ENCODE measurements at regions of chr11 and their contacts with region 1.

Region 1: DNA sequence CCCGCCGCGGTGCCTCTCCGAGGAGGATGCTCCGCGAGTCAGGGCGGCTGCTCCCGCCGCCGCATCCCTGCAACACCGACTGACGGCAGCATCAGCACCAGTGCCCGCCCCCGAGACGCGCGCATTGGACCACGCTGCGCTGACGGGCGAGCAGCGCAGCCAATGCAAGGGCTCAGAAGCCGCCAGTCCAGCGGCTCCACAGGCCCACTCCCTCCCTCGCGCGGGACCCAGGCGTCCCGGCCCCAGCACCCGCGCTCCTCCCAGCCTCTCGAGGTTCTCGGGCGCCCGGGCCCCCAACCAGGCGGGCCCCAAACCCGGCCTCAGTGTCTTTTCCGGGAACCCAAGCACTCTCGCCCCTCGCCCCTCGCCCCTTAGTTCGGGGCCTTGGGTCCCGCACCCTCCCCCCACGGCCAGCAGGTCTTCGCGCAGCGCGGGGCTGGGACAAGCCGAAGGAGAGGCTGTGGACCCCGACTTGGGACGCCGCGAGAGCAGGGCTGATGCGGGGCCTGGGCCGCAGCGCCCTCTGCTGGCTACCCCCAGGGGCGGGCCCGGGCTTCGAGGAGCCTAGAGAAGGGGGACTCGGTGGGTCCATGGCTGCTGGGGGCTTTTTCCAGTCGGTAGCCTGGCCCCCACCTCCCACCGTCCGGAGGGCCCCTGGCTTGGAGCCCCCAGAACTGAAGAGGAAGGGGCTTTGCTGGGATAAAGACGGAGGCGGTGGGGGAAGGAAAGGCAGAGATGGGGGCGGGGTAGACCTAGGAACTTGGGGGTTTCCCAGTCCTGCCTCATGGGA is at the start of gene NRXN2:
- DNase-seq: peak; percentile 78 to 89
- H3K4me3 ChIP-seq: peak within 1 kb of the TSS; percentile 59 to 69
- H3K27ac ChIP-seq: peak within 1 kb of the TSS; percentile 49 to 71
- H3K4me1 ChIP-seq: peaks cover 0 to 7% (median 3%) of the 10 kb centered on the region in 4 donors
- H3K27me3 ChIP-seq: peaks cover 0 to 45% of the 10 kb centered on the region in 2 donors
- CTCF ChIP-seq: peak; percentile 89 to 98

Region 2: GRCh38 chr11:64386306-64386702 is 337.0 kb before region 1 on chr11:
- intact Hi-C with region 1: loop called (anchors 10 kb)
- DNase-seq: no peak
- H3K4me3 ChIP-seq: no peak overlapping the region
- H3K27ac ChIP-seq: no peak overlapping the region
- H3K4me1 ChIP-seq: peaks cover 9 to 26% (median 20%) of the 10 kb centered on the region in 4 donors
- H3K27me3 ChIP-seq: no peaks in the 10 kb centered on the region
- CTCF ChIP-seq: no peak

Region 3: DNA sequence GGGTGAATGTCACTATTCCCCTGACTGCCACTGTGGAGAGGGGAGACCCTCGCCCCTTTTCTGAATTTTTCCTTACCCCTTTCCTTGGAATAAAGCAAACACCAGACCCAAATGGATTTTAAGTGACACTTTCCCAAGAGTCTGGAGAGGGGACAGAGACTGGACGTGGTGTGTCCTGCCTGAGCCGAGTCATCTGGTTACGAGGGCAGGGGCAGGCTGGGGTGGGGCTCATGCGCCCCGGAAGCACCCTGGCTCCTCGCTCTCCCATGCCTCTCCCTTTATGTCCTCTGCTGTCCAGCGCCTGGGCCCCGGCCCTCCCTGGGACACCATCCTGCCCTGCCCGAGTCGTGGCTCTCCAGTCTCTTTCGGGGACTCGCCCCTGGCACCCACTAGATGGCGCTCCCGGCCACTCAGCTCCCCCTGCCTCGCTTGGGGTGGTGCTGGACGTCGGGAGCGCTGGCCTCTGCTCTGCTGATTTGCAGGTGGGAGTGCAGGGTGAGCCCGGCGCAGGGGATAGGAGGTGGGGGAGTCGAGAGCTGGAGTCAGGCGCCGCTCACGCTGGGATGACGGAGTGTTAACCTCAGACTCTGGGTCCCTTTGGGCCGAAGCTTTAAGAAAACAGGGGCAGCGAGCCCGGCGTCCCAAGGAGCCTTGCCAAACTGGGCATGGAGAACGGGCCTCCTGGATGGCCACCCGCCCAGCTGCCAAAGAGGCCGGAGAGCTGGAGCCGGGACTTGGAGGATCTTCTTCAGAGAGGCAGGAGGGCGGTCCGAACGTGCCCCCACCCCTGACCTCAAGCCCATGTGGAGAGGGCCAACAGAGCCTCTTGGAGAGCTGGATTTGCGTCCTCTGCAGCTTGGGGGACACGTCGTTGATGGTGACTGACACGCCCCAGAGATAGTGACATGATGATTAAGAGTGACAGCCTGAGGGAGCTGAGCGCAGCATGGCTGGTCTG is 274.4 kb before region 1 on chr11:
- intact Hi-C with region 1: loop called (anchors 5 kb)
- DNase-seq: peak; percentile 81 to 94
- H3K4me3 ChIP-seq: peak overlapping the region; percentile 35 to 51
- H3K27ac ChIP-seq: peak overlapping the region; percentile 76 to 83
- H3K4me1 ChIP-seq: peaks cover 0 to 29% (median 22%) of the 10 kb centered on the region in 4 donors
- H3K27me3 ChIP-seq: no peaks in the 10 kb centered on the region
- CTCF ChIP-seq: peak; percentile 80 to 91

Region 4: DNA sequence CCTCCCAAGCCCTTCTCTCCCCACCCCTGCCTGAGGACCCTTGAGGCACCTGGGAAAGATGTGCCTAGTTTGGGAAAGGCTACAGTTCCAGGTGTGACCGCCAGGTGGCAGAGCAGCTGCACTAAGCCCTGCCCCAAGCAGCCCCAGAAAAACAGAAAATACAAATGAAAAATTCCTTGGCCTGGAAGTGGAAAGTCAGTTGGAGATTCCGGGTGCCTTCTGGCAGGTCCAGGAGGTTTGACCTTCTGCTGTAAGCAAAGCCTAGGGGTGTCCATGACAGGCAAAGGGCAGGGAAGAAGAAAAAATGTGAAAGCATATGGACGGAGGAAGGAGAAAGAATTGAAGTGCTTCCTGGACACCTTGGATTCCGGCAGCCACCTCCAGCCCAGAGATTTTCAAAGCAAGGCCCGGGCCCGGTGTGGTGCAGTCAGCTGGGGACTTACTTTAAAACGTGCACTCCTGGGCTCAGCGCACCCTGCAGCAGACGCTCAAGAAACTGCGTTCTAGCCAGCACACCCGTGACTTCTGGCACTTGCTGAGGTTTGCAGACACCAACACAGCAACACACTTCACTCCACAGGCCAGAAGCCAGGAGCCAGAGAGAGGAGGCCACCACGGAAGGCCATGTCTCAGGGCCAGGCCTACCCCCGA is 169.6 kb before region 1 on chr11:
- intact Hi-C with region 1: loop called (anchors 5 kb)
- DNase-seq: peak; percentile 57 to 80
- H3K4me3 ChIP-seq: no peak overlapping the region
- H3K27ac ChIP-seq: peak overlapping the region in 1 of 2 donors; percentile 56
- H3K4me1 ChIP-seq: peaks cover 0 to 22% (median 9%) of the 10 kb centered on the region in 4 donors
- H3K27me3 ChIP-seq: peaks cover 0 to 3% of the 10 kb centered on the region in 2 donors
- CTCF ChIP-seq: peak; percentile 95 to 98

Region 5: GRCh38 chr11:64652586-64653387 is 70.5 kb before region 1 on chr11:
- intact Hi-C with region 1: loop called (anchors 10 kb)
- DNase-seq: peak; percentile 79 to 85
- H3K4me3 ChIP-seq: no peak overlapping the region
- H3K27ac ChIP-seq: no peak overlapping the region
- H3K4me1 ChIP-seq: peaks cover 0 to 9% (median 0%) of the 10 kb centered on the region in 4 donors
- H3K27me3 ChIP-seq: peaks cover 0 to 12% of the 10 kb centered on the region in 2 donors
- CTCF ChIP-seq: peak; percentile 88 to 93

Measured in tibial artery (tissue), 4 donors.